ENCODE measurements at regions of chr15 and their contacts with region 1.

Region 1: DNA sequence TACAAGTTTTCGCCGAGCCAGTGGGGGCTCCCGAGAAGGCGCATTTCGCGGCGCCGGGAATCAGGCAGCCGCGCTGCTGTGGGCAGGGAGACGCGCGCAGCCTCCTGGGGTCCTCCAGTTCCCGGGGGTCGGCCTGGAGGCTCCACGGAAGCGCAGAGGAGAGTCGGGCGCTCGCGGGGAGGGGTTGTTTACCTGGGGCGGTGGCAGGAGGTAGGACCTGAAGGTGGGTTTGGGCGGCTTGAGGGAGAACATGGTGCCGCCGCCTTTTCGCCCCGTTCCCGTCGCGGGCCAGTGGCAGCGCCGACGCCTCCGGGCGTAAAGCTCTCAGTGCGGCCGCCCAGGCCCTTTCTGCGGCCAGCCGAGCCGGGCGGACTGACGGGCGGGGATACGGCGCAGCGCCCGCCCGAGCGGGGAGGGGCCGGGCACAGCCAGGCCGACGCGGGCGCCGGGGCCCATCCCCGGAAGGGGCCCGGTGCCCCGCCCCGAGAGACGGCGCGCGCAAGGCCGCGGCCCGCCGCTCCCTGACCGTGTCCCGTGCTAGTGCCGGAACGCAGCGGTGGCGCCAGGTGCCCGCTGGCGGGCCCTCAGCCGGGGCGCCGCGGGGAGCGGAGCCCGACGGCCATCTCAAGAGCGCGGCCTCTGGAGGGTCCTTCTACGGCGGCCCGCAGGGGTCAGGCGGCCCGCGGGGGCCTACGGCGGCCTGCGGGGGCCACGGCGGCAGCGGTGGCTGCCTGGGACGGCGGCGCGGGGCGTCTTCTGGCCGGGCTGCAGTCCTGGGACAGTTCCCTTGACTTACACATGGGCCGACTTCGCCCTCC is at the start of gene MTMR10:
- DNase-seq: peak; percentile 65
- H3K4me3 Mint-ChIP-seq: peak within 1 kb of the TSS; percentile 92
- H3K27ac Mint-ChIP-seq: peak within 1 kb of the TSS; percentile 97
- H3K4me1 Mint-ChIP-seq: peaks cover 13% of the 10 kb centered on the region
- H3K27me3 Mint-ChIP-seq: no peaks in the 10 kb centered on the region
- CTCF ChIP-seq: no peak
- total RNA-seq, gene MTMR10: 11.4 and 13.0 TPM in 2 replicates

Region 2: DNA sequence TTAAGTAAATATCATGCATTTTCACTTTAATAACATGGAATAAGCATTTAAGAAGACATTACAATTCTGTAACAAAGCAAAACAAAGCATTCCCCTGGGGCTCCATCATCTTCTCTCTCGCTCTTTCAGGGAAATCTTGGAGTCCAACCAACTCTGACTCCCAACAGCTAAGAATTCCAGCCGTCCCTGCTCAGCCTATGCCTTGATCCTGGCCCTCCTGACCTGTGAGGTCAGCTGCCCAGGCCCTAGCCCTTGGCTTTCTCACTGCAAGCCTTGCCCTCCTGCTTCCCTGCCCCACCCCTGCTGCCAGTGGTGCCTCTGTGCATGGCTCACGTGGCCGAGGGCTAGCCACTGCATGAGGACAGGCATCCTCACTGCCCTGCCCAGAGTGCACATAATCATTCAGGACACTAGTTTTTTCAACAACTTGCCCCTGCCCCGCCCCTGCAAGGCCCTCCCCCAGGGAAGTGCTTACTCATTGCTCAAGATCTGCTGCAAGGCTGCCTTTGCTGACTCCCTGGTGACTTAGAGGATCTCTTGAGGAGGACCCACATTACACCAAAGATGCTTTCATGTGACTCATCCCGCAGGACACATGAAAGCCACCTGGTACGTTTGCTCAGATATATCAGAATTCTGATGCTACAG is 37.6 kb before region 1 on chr15:
- CTCF ChIA-PET with region 1: interaction called, 4 read pairs
- POLR2A ChIA-PET with region 1: interaction called, 6 read pairs
- intact Hi-C with region 1: loop called (anchors 2 kb)
- DNase-seq: peak; percentile 83
- H3K4me3 Mint-ChIP-seq: no peak overlapping the region
- H3K27ac Mint-ChIP-seq: no peak overlapping the region
- H3K4me1 Mint-ChIP-seq: peaks cover 12% of the 10 kb centered on the region
- H3K27me3 Mint-ChIP-seq: no peaks in the 10 kb centered on the region
- CTCF ChIP-seq: no peak

Region 3: GRCh38 chr15:30969696-30970095 is 21.8 kb before region 1 on chr15:
- CTCF ChIA-PET with region 1: interaction called, 4 read pairs
- POLR2A ChIA-PET with region 1: interaction called, 10 read pairs
- intact Hi-C with region 1: no loop called
- DNase-seq: no peak
- H3K4me3 Mint-ChIP-seq: no peak overlapping the region
- H3K27ac Mint-ChIP-seq: no peak overlapping the region
- H3K4me1 Mint-ChIP-seq: no peaks in the 10 kb centered on the region
- H3K27me3 Mint-ChIP-seq: no peaks in the 10 kb centered on the region
- CTCF ChIP-seq: no peak

Region 4: GRCh38 chr15:31004220-31004733 is 12.8 kb after region 1 on chr15:
- CTCF ChIA-PET with region 1: interaction called, 3 read pairs
- POLR2A ChIA-PET with region 1: interaction called, 35 read pairs
- intact Hi-C with region 1: no loop called
- DNase-seq: no peak
- H3K4me3 Mint-ChIP-seq: no peak overlapping the region
- H3K27ac Mint-ChIP-seq: no peak overlapping the region
- H3K4me1 Mint-ChIP-seq: peaks cover 5% of the 10 kb centered on the region
- H3K27me3 Mint-ChIP-seq: no peaks in the 10 kb centered on the region
- CTCF ChIP-seq: no peak

Region 5: DNA sequence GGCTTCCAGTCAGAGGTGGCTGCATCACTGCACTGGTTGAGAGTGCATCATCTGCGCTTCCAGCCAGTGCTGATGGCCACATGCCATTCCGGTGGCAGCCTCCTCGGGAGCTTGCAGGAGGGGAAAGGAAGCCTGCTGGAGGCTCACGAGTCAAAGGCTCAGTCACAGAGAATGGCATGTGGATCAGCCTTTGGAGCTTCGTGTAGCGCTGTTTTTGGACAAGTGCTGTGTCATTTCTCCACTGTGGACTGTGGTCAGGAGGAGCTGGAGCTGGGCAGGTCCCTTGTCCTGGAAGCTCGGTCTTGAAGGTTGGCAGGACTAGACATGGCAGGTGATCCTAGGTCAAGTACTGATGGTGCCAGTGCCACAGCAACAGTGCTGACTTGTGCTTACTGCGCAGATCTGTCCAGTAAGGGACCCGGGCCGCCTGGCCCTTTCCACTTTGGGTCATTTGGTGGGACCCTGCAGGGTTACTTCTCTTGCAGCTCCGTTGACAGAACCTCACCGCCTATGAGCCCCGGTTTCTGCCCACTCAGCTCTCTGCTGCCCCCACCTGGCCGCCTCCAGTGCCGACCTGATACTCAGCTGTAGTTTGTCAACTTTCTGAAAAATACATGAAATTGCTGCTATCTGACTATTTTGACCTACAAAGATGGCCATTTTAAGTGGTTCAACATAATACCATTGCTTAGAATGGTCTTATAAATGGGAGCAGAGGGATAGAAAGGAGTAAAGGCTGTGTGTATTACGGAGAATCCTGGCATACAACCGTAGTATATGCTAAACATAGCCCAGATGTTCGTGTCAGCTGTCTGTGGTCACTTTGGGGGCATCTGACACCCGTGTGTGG is 137.7 kb after region 1 on chr15:
- CTCF ChIA-PET with region 1: interaction called, 5 read pairs
- POLR2A ChIA-PET with region 1: interaction called, 7 read pairs
- intact Hi-C with region 1: loop called (anchors 2 kb)
- DNase-seq: peak; percentile 61
- H3K4me3 Mint-ChIP-seq: no peak overlapping the region
- H3K27ac Mint-ChIP-seq: no peak overlapping the region
- H3K4me1 Mint-ChIP-seq: no peaks in the 10 kb centered on the region
- H3K27me3 Mint-ChIP-seq: no peaks in the 10 kb centered on the region
- CTCF ChIP-seq: peak; percentile 92